H1 (cell line): ENCODE measurements at regions of chr11 and their contacts with region 1.

Region 1: GRCh38 chr11:44095506-44096394 is at the start of gene EXT2:
- DNase-seq: peak in 1 of 2 experiments; percentile 94
- H3K4me3 ChIP-seq: peak within 1 kb of the TSS; percentile 64 to 88 (median 70)
- H3K27ac ChIP-seq: no peak within 1 kb of the TSS
- H3K4me1 ChIP-seq: peaks cover 0 to 1% (median 0%) of the 10 kb centered on the region in 4 experiments; a peak in 1 of 7 replicates
- H3K27me3 ChIP-seq: no peaks in the 10 kb centered on the region
- CTCF ChIP-seq: peak; percentile 83 to 90 (median 86)
- EP300 ChIP-seq: no peak
- POLR2A ChIP-seq: no peak
- RAD21 ChIP-seq: peak in 1 of 2 experiments; percentile 31; a peak in 1 of 4 replicates
- total RNA-seq, gene EXT2: 38.9 and 42.8 TPM in 2 replicates

Region 2: DNA sequence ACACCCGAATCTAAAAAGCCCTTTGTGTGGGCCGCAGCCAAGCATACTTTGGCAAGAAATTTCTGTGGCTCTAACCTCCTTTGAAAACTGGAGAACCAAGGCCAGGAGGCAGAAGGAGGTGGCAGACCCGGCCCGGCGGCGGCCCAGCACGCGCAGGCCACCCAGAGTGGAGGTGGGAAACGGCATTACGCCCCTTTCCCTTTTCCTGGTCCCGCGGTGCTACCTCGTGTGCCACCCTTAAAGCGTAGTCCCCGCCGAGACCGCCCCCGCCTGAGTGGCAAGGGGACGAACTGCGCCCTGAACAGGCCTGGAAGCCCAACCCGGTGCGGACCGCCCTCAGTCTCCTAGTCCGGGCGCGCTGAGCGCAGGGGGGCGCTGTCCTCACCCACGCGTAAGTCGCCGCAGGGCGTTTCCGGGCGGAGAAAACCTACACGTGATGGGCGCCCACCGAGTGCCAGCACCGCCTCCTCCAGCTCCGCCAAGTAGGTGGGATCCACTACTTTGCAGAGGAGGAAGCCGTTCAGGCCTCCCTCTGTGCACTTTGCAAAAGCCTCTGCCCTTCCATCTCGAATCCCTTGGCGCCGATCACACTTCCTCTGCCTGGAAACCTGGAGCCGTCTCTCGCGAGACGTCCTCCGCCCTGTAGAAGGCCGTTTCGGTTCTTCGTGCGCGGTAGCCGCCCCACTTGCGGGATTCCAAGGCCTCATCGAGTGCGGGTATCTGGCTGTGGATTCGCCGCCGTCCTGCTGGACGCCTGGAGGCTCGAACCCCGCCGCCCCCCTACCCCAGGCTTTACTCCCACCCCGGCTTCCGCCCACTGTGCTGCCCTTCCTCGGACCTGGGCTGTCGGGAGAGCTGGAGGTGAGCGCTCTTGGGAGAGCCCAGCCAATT is 29.7 kb before region 1 on chr11 and contains the start of gene ACCS:
- CTCF ChIA-PET with region 1: interaction called, 23 read pairs
- POLR2A ChIA-PET with region 1: interaction called, 3 read pairs
- DNase-seq: peak; percentile 85 to 92
- H3K4me3 ChIP-seq: peak within 1 kb of the TSS; percentile 38 to 68 (median 58)
- H3K27ac ChIP-seq: peak within 1 kb of the TSS; percentile 65
- H3K4me1 ChIP-seq: peaks cover 2 to 7% (median 4%) of the 10 kb centered on the region in 4 experiments
- H3K27me3 ChIP-seq: peaks cover 0 to 4% (median 2%) of the 10 kb centered on the region in 4 experiments; a peak in 3 of 7 replicates
- CTCF ChIP-seq: peak; percentile 61 to 76 (median 74)
- EP300 ChIP-seq: peak in 1 of 2 experiments; percentile 4; a peak in 1 of 3 replicates
- POLR2A ChIP-seq: peak in 1 of 2 experiments; percentile 80; a peak in 2 of 3 replicates
- RAD21 ChIP-seq: peak; percentile 1 to 23; a peak in 1 of 4 replicates
- total RNA-seq, gene ACCS: 4.3 and 6.0 TPM in 2 replicates

Region 3: GRCh38 chr11:44071157-44071556 is 24.6 kb before region 1 on chr11:
- CTCF ChIA-PET with region 1: interaction called, 23 read pairs
- POLR2A ChIA-PET with region 1: interaction called, 3 read pairs
- DNase-seq: no peak
- H3K4me3 ChIP-seq: no peak overlapping the region
- H3K27ac ChIP-seq: no peak overlapping the region
- H3K4me1 ChIP-seq: peaks cover 0 to 3% (median 0%) of the 10 kb centered on the region in 4 experiments; a peak in 4 of 7 replicates
- H3K27me3 ChIP-seq: peaks cover 0 to 4% (median 2%) of the 10 kb centered on the region in 4 experiments; a peak in 3 of 7 replicates
- CTCF ChIP-seq: peak; percentile 44 to 50 (median 49); a peak in 3 of 4 replicates
- EP300 ChIP-seq: no peak
- POLR2A ChIP-seq: no peak
- RAD21 ChIP-seq: peak; percentile 11 to 41; a peak in 1 of 4 replicates

Region 4: GRCh38 chr11:44083906-44084305 is 11.8 kb before region 1 on chr11:
- CTCF ChIA-PET with region 1: interaction called, 30 read pairs
- POLR2A ChIA-PET with region 1: interaction called, 4 read pairs
- DNase-seq: no peak
- H3K4me3 ChIP-seq: no peak overlapping the region
- H3K27ac ChIP-seq: no peak overlapping the region
- H3K4me1 ChIP-seq: peaks cover 0 to 3% (median 1%) of the 10 kb centered on the region in 4 experiments; a peak in 1 of 7 replicates
- H3K27me3 ChIP-seq: no peaks in the 10 kb centered on the region
- CTCF ChIP-seq: no peak
- EP300 ChIP-seq: no peak
- POLR2A ChIP-seq: no peak
- RAD21 ChIP-seq: no peak

Region 5: DNA sequence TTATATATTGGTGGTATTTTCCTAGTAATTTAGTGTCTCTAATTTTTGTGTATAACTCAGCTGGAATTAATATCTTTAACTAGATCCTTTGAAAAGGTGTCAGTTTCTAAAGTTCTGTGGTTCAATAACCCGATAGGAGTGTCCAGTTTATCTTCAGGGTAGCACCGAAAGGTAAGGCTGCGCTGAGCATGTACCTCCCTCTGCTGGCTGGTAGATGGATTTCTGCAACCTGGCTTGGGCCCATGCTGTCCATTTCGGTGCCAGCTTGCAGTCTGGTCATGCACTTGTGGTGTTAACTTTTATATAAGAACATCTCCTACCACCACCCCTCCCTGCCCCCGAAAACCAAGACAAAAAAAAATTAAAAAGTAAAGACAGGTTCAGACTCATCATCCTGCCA is 24.4 kb after region 1 on chr11:
- CTCF ChIA-PET with region 1: interaction called, 16 read pairs
- POLR2A ChIA-PET with region 1: no interaction called
- DNase-seq: no peak
- H3K4me3 ChIP-seq: no peak overlapping the region
- H3K27ac ChIP-seq: no peak overlapping the region
- H3K4me1 ChIP-seq: no peaks in the 10 kb centered on the region
- H3K27me3 ChIP-seq: no peaks in the 10 kb centered on the region
- CTCF ChIP-seq: peak; percentile 57 to 75 (median 70)
- EP300 ChIP-seq: no peak
- POLR2A ChIP-seq: no peak
- RAD21 ChIP-seq: peak; percentile 61